ENCODE measurements at regions of chr22 and their contacts with region 1.

Region 1: DNA sequence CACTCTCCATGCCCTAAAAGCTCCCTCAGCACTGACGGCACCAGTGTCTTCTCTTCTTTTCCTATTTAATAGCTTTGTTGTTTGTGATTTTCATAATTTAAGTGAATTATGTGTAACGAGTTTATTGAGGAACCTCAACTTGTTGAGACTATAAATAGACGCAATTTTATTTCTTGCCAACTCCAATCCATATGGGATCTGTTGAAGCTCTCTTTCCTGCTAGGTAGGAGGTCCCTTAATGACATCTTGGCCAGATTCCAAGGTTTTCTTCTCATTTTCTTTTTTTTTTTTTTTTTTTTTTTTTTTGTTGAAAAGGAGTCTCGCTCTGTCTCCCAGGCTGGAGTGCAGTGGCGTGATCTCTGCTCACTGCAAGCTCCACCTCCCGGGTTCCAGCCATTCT is 14.2 kb downstream of the RTL6 start:
- DNase-seq: no peak
- ATAC-seq: no peak
- H3K4me3 Mint-ChIP-seq: no peak overlapping the region
- H3K27ac Mint-ChIP-seq: no peak overlapping the region
- H3K4me1 Mint-ChIP-seq: peaks cover 7 to 22% (median 15%) of the 10 kb centered on the region in 4 donors
- H3K27me3 Mint-ChIP-seq: peaks cover 0 to 5% (median 0%) of the 10 kb centered on the region in 5 donors

Region 2: DNA sequence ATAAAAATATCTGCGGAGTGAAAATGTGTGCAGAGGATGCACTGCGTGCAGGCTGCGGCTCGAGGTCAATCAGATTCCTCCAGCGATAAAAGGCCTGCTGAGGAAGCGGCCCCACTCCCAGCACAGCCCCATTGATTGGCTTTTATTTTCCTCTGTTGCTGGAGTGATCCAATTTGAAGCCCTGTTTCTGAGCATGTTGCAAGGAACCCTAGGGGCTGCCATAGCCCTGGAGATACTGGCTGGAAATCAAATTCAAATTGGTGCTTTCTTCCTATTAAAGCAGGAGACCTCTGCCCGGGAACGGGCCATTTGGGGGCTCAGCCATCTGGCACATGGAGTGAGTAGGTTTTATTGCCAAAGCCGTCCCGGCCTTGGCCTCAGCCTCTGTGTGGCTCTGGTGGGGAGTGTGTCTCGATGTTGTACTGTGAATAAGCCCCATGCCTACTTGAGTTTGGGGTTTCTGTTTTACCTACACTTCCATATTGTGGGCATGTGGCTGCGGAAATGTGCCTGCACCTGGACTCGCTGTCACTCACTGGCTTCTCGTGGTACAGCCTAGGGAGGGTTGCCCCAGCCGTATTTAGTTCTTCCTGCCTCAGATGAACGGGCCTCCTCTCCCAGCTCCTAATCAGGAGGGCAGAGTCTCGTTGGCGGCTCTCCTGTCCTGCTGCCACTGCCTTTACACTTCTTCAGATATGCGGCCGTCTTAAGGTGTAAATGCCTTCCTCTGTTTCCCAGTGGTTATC is 434.2 kb before region 1 on chr22:
- POLR2A ChIA-PET with region 1: interaction called, 11 read pairs
- DNase-seq: no peak
- ATAC-seq: no peak
- H3K4me3 Mint-ChIP-seq: peak overlapping the region in 1 of 10 donors; percentile 41
- H3K27ac Mint-ChIP-seq: peak overlapping the region in 1 of 10 donors; percentile 22
- H3K4me1 Mint-ChIP-seq: peaks cover 7 to 20% (median 15%) of the 10 kb centered on the region in 4 donors
- H3K27me3 Mint-ChIP-seq: peaks cover 2 to 14% (median 10%) of the 10 kb centered on the region in 5 donors

Region 3: DNA sequence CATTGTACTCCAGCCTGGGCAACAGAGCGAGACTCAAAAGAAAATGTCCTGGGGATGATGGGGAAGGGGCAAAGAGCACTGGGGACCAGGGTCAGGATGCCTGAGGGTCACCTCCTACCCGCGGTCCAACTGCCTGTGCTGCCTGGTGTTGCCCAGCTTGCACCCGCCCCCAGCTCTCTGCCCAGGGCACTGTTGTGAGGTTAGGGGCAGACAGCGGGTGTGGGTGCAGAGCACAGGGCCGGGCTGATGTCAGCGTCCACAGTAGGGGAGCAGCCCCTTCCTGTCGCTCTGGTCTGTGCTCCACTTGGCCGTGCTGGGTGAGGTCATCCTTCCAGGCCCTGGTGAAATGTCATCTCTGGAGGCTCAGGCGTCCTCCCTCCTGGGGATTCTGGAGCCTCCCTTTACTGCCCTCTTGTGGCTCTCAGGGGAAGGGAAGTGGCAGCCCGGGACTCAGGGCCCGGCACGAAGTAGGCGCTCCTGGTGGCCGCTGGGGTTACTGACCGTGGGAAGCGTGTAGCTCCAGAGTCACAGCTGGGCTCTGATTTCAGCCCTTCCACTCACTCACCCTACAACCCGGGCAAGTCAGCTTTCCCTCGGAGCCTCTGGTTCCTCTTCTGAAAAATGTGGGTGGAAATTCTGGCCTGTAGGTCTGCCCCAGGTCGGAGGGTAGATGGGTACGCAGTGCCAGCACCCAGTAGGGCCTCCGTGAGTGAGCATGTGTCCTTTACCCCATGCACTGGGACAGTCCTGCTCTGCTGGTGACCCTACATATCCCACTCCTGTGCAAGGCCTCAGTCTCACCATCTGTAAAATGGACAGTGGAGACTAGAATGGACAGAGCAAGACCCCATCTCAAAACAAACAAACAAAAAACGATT is 200.9 kb after region 1 on chr22:
- POLR2A ChIA-PET with region 1: no interaction called
- DNase-seq: peak; percentile 61 to 88 (median 79)
- ATAC-seq: peak; percentile 88 to 90
- H3K4me3 Mint-ChIP-seq: peak overlapping the region; percentile 4 to 81 (median 51)
- H3K27ac Mint-ChIP-seq: peak overlapping the region in 9 of 10 donors; percentile 67 to 92 (median 82)
- H3K4me1 Mint-ChIP-seq: peaks cover 30 to 62% (median 51%) of the 10 kb centered on the region in 4 donors
- H3K27me3 Mint-ChIP-seq: no peaks in the 10 kb centered on the region

Measured in naive thymus-derived CD8-positive, alpha-beta T cell (primary cell).